Cardiac septum (tissue), 1 donor: ENCODE measurements at regions of chr1 and their contacts with region 1.

Region 1: GRCh38 chr1:223695941-223696340 is 16.4 kb upstream of the CAPN2 start:
- DNase-seq: no peak

Region 2: GRCh38 chr1:223780949-223781348 is 85.0 kb after region 1 on chr1:
- intact Hi-C with region 1: no loop called
- DNase-seq: no peak

Region 3: GRCh38 chr1:224052772-224053171 is 356.8 kb after region 1 on chr1:
- intact Hi-C with region 1: loop called (anchors 5 kb)
- DNase-seq: no peak